ENCODE measurements at regions of chr10 and their contacts with region 1.

Region 1: DNA sequence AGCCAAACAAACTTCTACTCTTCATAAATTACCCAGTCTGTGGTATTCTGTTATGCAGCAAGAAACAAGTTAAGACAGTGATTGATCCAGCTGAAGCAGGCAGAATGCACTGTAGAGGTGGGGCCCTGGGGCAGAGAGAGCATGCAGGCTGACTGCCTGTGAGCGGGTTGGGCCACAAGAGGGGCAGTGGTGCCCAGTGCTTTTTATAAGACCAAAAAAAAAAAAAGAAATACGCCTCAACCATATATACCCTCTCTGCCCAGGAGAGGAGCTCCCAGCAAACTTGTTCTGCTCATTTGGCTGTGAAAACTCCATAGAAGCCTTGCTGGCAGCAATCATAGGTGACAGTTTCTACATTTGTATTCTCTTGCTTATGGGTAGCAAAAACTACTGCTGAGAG is 104.7 kb downstream of the SORBS1 start:
- DNase-seq: no peak
- H3K4me3 ChIP-seq: no peak overlapping the region
- CTCF ChIP-seq: no peak

Region 2: DNA sequence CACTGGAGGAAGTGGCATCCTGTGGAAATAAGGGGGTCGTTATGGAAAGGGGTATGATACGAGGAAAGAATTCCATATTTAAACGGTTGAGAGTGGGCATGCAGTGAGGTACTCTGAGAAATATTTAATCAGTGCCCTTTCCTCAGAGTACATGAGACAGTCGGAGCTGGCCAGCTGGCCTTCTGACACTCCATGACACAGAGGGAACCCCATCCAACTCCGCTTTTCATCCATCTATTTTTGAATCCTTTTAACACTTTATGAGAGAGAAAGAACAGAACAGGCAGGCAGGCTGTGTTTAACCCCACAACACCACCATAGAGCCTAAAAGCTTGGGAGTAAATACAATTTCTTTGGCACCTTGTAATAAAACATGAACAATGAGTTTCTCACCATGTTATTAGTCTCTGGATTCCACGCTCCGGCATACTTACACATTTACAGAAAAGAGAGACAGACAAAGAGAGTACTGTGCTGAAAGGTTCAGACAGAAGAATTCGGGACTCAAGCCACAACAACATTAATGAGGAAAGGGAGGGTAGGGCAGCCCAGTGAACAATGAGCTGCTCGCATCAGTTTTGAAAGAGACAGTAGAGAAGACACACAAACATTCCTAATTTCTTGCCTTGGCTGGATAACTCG is 41.6 kb before region 1 on chr10:
- CTCF ChIA-PET with region 1: no interaction called
- POLR2A ChIA-PET with region 1: no interaction called
- DNase-seq: no peak
- H3K4me3 ChIP-seq: no peak overlapping the region
- CTCF ChIP-seq: no peak

Region 3: GRCh38 chr10:95445837-95446486 is 10.6 kb before region 1 on chr10:
- CTCF ChIA-PET with region 1: interaction called, 10 read pairs
- POLR2A ChIA-PET with region 1: no interaction called
- DNase-seq: peak; percentile 19
- H3K4me3 ChIP-seq: no peak overlapping the region
- CTCF ChIP-seq: peak; percentile 74

Region 4: DNA sequence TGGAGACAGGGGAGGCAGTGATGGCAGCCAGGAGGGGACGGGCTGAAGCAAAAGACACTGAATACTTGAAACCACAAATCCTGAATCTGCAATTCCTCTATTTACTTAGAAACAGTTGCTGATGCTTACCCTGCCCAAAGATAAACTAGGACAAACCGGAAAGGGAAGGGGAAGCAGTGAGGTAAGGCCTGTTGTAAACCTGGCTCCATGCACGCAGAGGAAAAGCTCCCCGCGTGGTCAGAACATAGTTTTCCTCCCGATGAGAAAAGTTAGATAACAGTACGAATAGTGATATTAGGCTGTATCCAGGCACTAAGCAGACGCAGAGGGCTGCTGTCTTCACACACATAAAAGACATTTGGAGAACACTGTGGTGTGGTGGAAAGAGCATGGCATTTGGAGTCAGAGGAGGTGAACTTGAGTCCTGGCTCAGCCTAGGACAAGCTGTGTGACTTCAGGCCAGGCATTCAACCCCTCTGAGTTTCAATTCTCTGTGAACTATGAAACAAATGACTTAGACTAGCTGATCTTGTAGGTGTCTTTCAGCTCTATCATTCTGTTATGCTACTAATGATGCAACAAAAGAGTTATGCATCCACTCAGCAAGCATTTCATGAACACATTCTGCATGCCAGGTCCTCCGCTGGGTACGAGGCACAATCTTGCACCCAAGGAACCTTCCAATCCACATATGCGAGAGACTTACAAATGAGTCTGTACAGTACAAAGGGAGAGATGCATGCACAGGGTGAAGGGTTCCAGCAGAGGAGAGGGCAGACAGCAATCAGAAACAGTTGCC is 23.8 kb after region 1 on chr10:
- CTCF ChIA-PET with region 1: no interaction called
- POLR2A ChIA-PET with region 1: no interaction called
- DNase-seq: no peak
- H3K4me3 ChIP-seq: no peak overlapping the region
- CTCF ChIP-seq: no peak

Measured in AG04449 (cell line).